Left lung (tissue), 14 donors: ENCODE measurements at regions of chr1 and their contacts with region 1.

Region 1: GRCh38 chr1:113978863-113979702 is at the start of gene OLFML3:
- DNase-seq: peak; percentile 79 to 95 (median 88)
- ATAC-seq: peak; percentile 87
- H3K4me3 ChIP-seq: peak within 1 kb of the TSS; percentile 21 to 23
- H3K27ac ChIP-seq: peak within 1 kb of the TSS; percentile 60 to 77
- H3K4me1 ChIP-seq: peaks cover 14 to 73% of the 10 kb centered on the region in 2 donors
- H3K27me3 ChIP-seq: no peaks in the 10 kb centered on the region
- CTCF ChIP-seq: peak; percentile 49 to 67
- polyA plus RNA-seq, gene OLFML3: 229 to 291 (median 273) TPM

Region 2: DNA sequence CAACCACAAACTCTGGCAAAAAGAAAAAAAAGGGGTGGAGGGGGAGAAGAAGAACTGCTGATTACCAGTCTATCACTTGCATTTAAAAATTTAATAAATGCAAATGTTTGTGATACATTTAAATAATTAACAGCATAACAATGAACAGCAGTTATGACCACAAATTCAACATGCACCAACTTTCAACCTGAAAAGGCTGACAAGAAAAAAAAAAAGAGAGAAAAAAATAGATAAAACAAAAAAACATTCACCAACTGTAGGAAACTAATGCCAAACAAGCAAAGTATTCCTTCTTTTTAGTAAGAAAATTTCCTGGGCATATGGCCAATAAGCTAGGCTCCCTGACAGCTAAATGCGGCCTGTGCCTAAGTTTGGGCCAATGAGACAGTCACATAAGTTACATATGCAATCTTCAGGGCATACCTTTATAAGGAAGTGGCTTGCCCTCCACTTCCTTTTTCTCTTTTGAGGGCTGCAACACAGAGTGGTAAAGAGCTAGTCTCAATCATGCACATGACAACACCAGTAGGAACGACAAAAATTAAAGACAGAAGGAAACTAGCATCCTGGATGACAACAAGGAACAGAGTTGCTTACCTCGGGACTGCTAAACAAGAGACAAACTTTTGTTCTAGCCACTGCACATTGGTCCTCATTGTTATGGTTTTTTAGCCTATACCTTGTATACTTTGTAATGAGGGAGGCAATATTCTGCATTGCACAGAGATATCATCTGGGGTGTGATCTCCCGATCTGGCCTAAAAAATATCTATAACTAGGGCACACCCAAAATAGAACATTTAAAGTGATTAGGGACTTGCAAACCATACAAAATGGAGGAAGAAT is 195.6 kb before region 1 on chr1:
- intact Hi-C with region 1: no loop called
- DNase-seq: peak in 3 of 4 donors; percentile 38 to 53 (median 39)
- ATAC-seq: peak; percentile 88
- H3K4me3 ChIP-seq: no peak overlapping the region
- H3K27ac ChIP-seq: peak overlapping the region; percentile 5 to 87
- H3K4me1 ChIP-seq: peaks cover 34 to 71% of the 10 kb centered on the region in 2 donors
- H3K27me3 ChIP-seq: no peaks in the 10 kb centered on the region
- CTCF ChIP-seq: no peak

Region 3: DNA sequence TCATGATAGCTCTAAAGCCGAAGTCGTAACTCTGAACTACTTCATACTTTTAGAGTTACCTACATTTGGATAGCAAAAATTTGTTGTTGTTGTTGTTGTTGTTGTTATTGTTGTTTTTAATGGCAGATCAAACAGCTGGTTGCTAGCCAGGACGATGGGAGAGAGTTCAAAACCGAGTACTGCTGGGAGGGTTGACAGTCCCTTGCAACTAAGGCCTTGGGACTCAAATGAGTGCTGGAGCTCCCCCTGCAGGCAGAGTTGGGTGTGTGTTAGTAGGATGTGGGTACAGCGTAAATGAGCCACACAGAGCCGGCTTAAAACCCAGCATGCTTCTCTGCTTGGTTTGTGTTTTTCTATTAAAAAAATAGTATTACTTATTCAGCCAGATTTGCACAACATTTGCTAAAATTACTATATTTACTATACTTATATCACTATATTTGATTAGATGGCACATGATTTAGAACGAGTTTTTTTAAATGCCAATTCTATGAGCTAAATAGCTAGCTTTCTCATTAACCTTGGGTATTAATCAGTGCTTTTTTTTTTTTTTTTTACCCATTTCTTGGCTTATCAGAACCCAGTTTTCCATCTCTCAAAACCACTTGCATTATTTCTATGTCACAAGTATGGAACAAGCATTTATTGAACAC is 303.8 kb after region 1 on chr1:
- intact Hi-C with region 1: loop called in 1 of 2 experiments (anchors 5 kb)
- DNase-seq: peak; percentile 79 to 91 (median 88)
- ATAC-seq: peak; percentile 100
- H3K4me3 ChIP-seq: no peak overlapping the region
- H3K27ac ChIP-seq: no peak overlapping the region
- H3K4me1 ChIP-seq: no peaks in the 10 kb centered on the region
- H3K27me3 ChIP-seq: no peaks in the 10 kb centered on the region
- CTCF ChIP-seq: peak; percentile 83 to 90